ENCODE measurements at regions of chrX and their contacts with region 1.

Region 1: GRCh38 chrX:19334945-19335626 is 8.6 kb upstream of the PDHA1 start:
- DNase-seq: no peak
- H3K4me3 ChIP-seq: no peak overlapping the region
- H3K27ac ChIP-seq: no peak overlapping the region
- H3K4me1 ChIP-seq: no peaks in the 10 kb centered on the region
- H3K27me3 ChIP-seq: peaks cover 26% of the 10 kb centered on the region
- CTCF ChIP-seq: peak; percentile 54

Region 2: GRCh38 chrX:18886344-18887161 is 448.5 kb before region 1 on chrX:
- CTCF ChIA-PET with region 1: no interaction called
- POLR2A ChIA-PET with region 1: no interaction called
- intact Hi-C with region 1: loop called (anchors 2 kb)
- DNase-seq: peak; percentile 76 to 80
- H3K4me3 ChIP-seq: peak overlapping the region; percentile 51
- H3K27ac ChIP-seq: no peak overlapping the region
- H3K4me1 ChIP-seq: peaks cover 8% of the 10 kb centered on the region; the same call in 1 of the 2 replicates
- H3K27me3 ChIP-seq: no peaks in the 10 kb centered on the region
- CTCF ChIP-seq: peak; percentile 68

Region 3: GRCh38 chrX:19017271-19017670 is 317.8 kb before region 1 on chrX:
- CTCF ChIA-PET with region 1: no interaction called
- POLR2A ChIA-PET with region 1: interaction called, 3 read pairs
- intact Hi-C with region 1: loop called (anchors 2 kb)
- DNase-seq: peak in 1 of 2 experiments; percentile 6
- H3K4me3 ChIP-seq: no peak overlapping the region
- H3K27ac ChIP-seq: no peak overlapping the region
- H3K4me1 ChIP-seq: no peaks in the 10 kb centered on the region
- H3K27me3 ChIP-seq: no peaks in the 10 kb centered on the region
- CTCF ChIP-seq: peak; percentile 64

Region 4: DNA sequence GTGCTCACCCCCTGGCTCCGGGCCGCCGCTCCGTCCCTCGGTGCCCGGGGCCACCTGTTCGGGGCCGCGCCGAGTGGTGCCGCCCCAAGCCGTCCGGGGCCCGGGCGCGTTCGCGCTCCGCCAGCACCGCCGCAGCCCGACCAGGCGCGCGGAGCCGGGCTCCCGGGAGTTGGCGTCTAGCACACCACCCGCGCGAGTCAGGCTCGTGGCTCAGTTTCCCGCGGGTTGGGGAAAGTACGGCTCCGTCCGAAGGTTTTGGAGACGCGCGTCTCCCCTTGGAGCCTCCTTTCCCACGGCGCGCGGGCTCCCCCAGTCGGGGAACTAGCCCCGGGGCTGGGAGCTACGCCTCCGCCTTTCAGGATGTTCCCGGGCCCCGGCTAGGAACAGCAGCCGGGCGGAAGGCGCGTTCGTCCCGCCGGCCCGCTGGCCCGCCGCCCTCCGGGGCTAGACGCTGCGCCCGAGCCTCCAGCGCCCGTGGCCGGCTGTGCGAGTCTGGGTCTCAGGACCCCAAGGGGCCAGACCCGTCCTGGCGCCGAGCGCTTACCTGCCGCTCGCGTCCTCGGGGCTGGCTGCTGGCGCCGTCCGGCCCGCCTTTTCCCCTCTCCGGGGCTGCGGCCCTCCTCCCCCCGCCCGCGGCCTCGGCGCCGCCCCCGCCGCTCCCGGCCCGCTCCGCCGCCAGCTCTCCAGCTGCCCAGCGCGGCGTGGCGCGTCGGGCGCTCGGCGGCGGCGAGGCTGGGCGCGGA is 213.0 kb before region 1 on chrX and contains the start of gene ADGRG2:
- CTCF ChIA-PET with region 1: no interaction called
- POLR2A ChIA-PET with region 1: no interaction called
- intact Hi-C with region 1: loop called (anchors 5 kb)
- DNase-seq: peak in 1 of 2 experiments; percentile 31
- H3K4me3 ChIP-seq: no peak within 1 kb of the TSS
- H3K27ac ChIP-seq: no peak within 1 kb of the TSS
- H3K4me1 ChIP-seq: no peaks in the 10 kb centered on the region
- H3K27me3 ChIP-seq: 0 out of 2 replicates have a peak, but pooled peaks cover 10% of the 10 kb centered on the region
- CTCF ChIP-seq: no peak
- total RNA-seq, gene ADGRG2: 0.20 and 0.22 TPM in 2 replicates

Measured in PC-9 (cell line).